ENCODE measurements at regions of chr5 and their contacts with region 1.

Region 1: GRCh38 chr5:44795496-44795895 is 13.3 kb upstream of the MRPS30 start:
- DNase-seq: no peak
- H3K4me3 ChIP-seq: no peak overlapping the region
- H3K27ac ChIP-seq: no peak overlapping the region
- H3K4me1 ChIP-seq: no peaks in the 10 kb centered on the region
- H3K27me3 ChIP-seq: no peaks in the 10 kb centered on the region
- CTCF ChIP-seq: no peak

Region 2: DNA sequence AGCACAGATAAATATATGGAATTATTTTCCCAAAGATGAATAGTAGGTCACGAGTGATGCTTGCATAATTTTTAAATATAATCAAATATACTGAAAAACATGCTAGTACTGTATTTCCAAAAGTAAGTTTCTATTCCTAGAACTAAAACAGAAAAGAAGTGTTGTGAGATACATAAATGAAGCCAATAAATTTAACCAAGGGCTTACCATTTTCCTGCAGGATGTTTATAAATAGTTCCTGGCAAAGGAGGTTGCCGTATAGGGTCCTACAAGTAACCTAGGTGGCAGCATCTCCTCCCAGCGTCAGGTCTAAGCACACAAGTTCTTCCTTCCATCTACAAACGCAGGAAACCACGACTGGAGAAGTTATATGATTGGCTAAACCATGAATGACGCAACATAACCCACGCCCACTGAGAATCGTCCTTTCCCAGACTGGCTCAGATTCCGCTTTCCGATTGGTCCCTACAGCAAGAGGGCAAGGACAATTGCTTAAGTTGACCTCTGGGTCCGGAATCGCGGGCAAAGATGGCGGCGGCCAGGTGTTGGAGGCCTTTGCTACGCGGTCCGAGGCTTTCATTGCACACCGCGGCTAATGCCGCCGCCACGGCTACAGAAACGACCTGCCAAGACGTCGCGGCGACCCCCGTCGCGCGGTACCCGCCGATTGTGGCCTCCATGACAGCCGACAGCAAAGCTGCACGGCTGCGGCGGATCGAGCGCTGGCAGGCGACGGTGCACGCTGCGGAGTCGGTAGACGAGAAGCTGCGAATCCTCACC is 13.1 kb after region 1 on chr5 and contains the start of gene MRPS30:
- intact Hi-C with region 1: loop called (anchors 2 kb)
- DNase-seq: peak; percentile 78 to 97
- H3K4me3 ChIP-seq: peak within 1 kb of the TSS; percentile 66 to 79
- H3K27ac ChIP-seq: peak within 1 kb of the TSS; percentile 62 to 81
- H3K4me1 ChIP-seq: peaks cover 2 to 8% of the 10 kb centered on the region in 2 donors
- H3K27me3 ChIP-seq: no peaks in the 10 kb centered on the region
- CTCF ChIP-seq: peak in 2 of 3 experiments; percentile 18 to 43
- total RNA-seq, gene MRPS30: 39.9 TPM